Calu3 (cell line): ENCODE measurements at regions of chr7 and their contacts with region 1.

Region 1: GRCh38 chr7:96800824-96801223 is 91.2 kb upstream of the SEM1 start:
- DNase-seq: peak; percentile 15
- H3K4me3 Mint-ChIP-seq: no peak overlapping the region
- H3K27ac Mint-ChIP-seq: no peak overlapping the region
- H3K4me1 Mint-ChIP-seq: no peaks in the 10 kb centered on the region
- H3K27me3 Mint-ChIP-seq: no peaks in the 10 kb centered on the region
- CTCF ChIP-seq: no peak

Region 2: GRCh38 chr7:96701258-96701657 is 99.6 kb before region 1 on chr7:
- CTCF ChIA-PET with region 1: no interaction called
- intact Hi-C with region 1: loop called (anchors 2 kb)
- DNase-seq: peak; percentile 15
- H3K4me3 Mint-ChIP-seq: peak overlapping the region; percentile 35
- H3K27ac Mint-ChIP-seq: no peak overlapping the region
- H3K4me1 Mint-ChIP-seq: peaks cover 41% of the 10 kb centered on the region
- H3K27me3 Mint-ChIP-seq: no peaks in the 10 kb centered on the region
- CTCF ChIP-seq: no peak